ENCODE measurements at regions of chrX and their contacts with region 1.

Region 1: GRCh38 chrX:48689208-48689920 is 5.8 kb downstream of the WAS start:
- DNase-seq: no peak
- H3K4me3 Mint-ChIP-seq: no peak overlapping the region
- H3K27ac Mint-ChIP-seq: no peak overlapping the region
- H3K4me1 Mint-ChIP-seq: no peaks in the 10 kb centered on the region
- H3K27me3 Mint-ChIP-seq: peaks cover 53% of the 10 kb centered on the region
- CTCF ChIP-seq: no peak

Region 2: GRCh38 chrX:49019599-49020249 is 330.4 kb after region 1 on chrX:
- CTCF ChIA-PET with region 1: interaction called, 11 read pairs
- intact Hi-C with region 1: no loop called
- DNase-seq: no peak
- H3K4me3 Mint-ChIP-seq: no peak overlapping the region
- H3K27ac Mint-ChIP-seq: no peak overlapping the region
- H3K4me1 Mint-ChIP-seq: no peaks in the 10 kb centered on the region
- H3K27me3 Mint-ChIP-seq: no peaks in the 10 kb centered on the region
- CTCF ChIP-seq: no peak